T-cell (primary cell): ENCODE measurements at regions of chr5 and their contacts with region 1.

Region 1: GRCh38 chr5:40882291-40882690 is 27.0 kb upstream of the C7 start:
- DNase-seq: no peak
- ATAC-seq: no peak
- H3K4me3 ChIP-seq: no peak overlapping the region
- H3K4me3 Mint-ChIP-seq: no peak overlapping the region
- H3K27ac ChIP-seq: no peak overlapping the region
- H3K27ac Mint-ChIP-seq: no peak overlapping the region
- H3K4me1 ChIP-seq: no peaks in the 10 kb centered on the region
- H3K4me1 Mint-ChIP-seq: peaks cover 3 to 6% (median 4%) of the 10 kb centered on the region in 3 donors
- H3K27me3 ChIP-seq: peaks cover 0 to 5% of the 10 kb centered on the region in 2 experiments
- H3K27me3 Mint-ChIP-seq: no peaks in the 10 kb centered on the region

Region 2: GRCh38 chr5:40853632-40854192 is 28.6 kb before region 1 on chr5:
- CTCF ChIA-PET with region 1: interaction called in 1 of 2 experiments, 10 read pairs
- POLR2A ChIA-PET with region 1: no interaction called
- DNase-seq: no peak
- ATAC-seq: no peak
- H3K4me3 ChIP-seq: no peak overlapping the region
- H3K4me3 Mint-ChIP-seq: no peak overlapping the region
- H3K27ac ChIP-seq: no peak overlapping the region
- H3K27ac Mint-ChIP-seq: no peak overlapping the region
- H3K4me1 ChIP-seq: no peaks in the 10 kb centered on the region
- H3K4me1 Mint-ChIP-seq: peaks cover 0 to 6% (median 5%) of the 10 kb centered on the region in 3 donors
- H3K27me3 ChIP-seq: no peaks in the 10 kb centered on the region
- H3K27me3 Mint-ChIP-seq: no peaks in the 10 kb centered on the region